GM13976 (cell line): ENCODE measurements at regions of chr17 and their contacts with region 1.

Region 1: DNA sequence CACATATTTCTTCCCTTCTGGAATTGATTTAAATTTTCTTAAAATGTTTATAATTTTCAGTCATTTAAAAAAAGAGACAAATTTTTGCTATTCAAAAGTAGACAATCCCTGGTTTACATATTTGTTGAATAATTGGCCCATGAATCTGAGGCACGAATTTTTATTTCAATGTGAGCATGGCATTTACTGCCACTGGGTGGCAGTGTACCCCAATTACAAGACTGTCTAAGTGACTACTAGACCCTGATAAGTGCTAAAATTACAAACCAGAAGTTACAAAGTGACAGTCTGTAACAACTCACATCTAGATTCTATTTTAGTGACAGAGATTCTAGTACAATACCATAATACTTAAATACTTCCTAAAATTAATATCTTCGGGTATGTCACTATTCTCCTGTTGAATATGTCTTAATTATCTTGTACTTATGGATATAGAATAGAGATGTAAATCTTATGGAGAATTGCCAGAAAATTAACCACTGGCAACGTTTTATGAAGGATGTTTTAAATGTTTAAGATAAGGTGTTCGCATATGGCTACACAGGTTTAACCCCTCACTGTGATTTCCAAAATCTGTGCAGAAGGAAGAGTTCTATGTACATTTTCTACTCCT is 235.8 kb downstream of the MAP2K4 start:
- DNase-seq: peak; percentile 52
- CTCF ChIP-seq: peak; percentile 51

Region 2: GRCh38 chr17:12201294-12201880 is 55.1 kb before region 1 on chr17:
- in situ Hi-C with region 1: no loop called
- DNase-seq: no peak
- CTCF ChIP-seq: no peak

Region 3: GRCh38 chr17:12667299-12667958 is 410.9 kb after region 1 on chr17:
- in situ Hi-C with region 1: loop called (anchors 10 kb)
- DNase-seq: peak; percentile 64
- CTCF ChIP-seq: peak; percentile 36

Region 4: GRCh38 chr17:13002766-13003451 is 746.4 kb after region 1 on chr17:
- in situ Hi-C with region 1: loop called (anchors 10 kb)
- DNase-seq: peak; percentile 77
- CTCF ChIP-seq: peak; percentile 72